ENCODE measurements at regions of chr2 and their contacts with region 1.

Region 1: DNA sequence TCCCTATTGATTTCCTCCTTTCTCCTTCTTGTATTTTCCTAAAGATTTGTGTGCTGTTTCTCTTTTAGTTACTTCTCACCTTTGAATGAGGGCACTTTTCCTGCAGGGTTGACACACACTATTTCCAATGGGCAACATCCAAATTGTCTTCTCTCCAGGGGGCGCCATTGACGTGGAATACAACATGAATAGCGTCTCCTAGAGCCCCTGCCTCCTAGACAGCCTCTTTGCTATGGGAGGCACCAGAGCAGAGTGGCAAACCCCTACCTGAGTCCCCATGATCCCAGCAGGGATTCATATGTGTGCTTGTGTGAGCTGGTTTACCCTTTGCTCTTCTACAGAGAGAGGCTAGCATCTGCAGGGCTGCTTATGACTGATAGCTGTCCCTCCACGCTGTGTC is 61.3 kb upstream of the ITSN2 start:
- DNase-seq: peak in 1 of 2 experiments; percentile 83
- H3K4me3 ChIP-seq: no peak overlapping the region
- H3K27ac ChIP-seq: no peak overlapping the region
- H3K4me1 ChIP-seq: peaks cover 0 to 4% (median 1%) of the 10 kb centered on the region in 4 experiments; a peak in 2 of 7 replicates
- H3K27me3 ChIP-seq: no peaks in the 10 kb centered on the region
- CTCF ChIP-seq: peak; percentile 26 to 75 (median 62)
- EP300 ChIP-seq: no peak
- POLR2A ChIP-seq: no peak
- RAD21 ChIP-seq: peak; percentile 83 to 86

Region 2: DNA sequence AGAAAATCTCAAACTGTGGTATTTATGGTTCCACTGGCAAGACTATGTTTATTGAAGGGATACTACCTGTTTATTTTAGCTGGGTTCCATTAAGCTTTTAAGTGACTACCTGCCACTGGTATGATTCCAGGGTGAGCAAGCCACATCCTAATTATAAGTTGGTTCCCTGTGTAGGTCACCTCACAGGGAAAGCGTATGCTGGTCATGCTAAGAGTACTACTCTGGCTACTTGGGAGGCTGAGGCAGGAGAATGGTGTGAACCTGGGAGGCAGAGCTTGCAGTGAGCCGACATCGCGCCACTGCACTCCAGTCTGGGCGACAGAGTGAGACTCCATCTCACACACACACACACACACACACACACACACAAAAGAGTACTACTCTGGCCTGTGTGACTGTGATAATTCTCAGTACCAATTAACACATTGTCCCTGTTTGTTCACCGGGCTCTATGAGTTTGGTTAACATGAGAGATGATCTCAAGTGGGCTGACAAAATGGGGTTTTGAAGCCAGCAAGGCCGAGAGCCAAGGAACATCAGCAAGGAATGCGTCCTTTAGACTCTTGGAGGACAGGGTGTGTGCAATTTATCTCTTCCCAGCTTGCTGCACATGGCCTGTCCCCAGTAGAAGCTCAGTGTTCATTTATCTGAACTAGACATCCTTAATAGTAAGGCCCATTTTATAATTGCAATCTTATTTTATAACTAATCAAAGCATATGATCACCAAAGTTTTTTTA is 46.1 kb before region 1 on chr2:
- CTCF ChIA-PET with region 1: no interaction called
- POLR2A ChIA-PET with region 1: no interaction called
- DNase-seq: peak in 1 of 2 experiments; percentile 37
- H3K4me3 ChIP-seq: no peak overlapping the region
- H3K27ac ChIP-seq: no peak overlapping the region
- H3K4me1 ChIP-seq: no peaks in the 10 kb centered on the region
- H3K27me3 ChIP-seq: no peaks in the 10 kb centered on the region
- CTCF ChIP-seq: no peak
- EP300 ChIP-seq: no peak
- POLR2A ChIP-seq: no peak
- RAD21 ChIP-seq: no peak

Region 3: GRCh38 chr2:24409700-24410556 is 11.7 kb before region 1 on chr2:
- CTCF ChIA-PET with region 1: interaction called, 24 read pairs
- POLR2A ChIA-PET with region 1: no interaction called
- DNase-seq: no peak
- H3K4me3 ChIP-seq: no peak overlapping the region
- H3K27ac ChIP-seq: no peak overlapping the region
- H3K4me1 ChIP-seq: peaks cover 0 to 7% (median 3%) of the 10 kb centered on the region in 4 experiments; a peak in 2 of 7 replicates
- H3K27me3 ChIP-seq: no peaks in the 10 kb centered on the region
- CTCF ChIP-seq: peak in 2 of 3 experiments; percentile 76 to 90; a peak in 3 of 4 replicates
- EP300 ChIP-seq: no peak
- POLR2A ChIP-seq: no peak
- RAD21 ChIP-seq: peak; percentile 90 to 97

Region 4: DNA sequence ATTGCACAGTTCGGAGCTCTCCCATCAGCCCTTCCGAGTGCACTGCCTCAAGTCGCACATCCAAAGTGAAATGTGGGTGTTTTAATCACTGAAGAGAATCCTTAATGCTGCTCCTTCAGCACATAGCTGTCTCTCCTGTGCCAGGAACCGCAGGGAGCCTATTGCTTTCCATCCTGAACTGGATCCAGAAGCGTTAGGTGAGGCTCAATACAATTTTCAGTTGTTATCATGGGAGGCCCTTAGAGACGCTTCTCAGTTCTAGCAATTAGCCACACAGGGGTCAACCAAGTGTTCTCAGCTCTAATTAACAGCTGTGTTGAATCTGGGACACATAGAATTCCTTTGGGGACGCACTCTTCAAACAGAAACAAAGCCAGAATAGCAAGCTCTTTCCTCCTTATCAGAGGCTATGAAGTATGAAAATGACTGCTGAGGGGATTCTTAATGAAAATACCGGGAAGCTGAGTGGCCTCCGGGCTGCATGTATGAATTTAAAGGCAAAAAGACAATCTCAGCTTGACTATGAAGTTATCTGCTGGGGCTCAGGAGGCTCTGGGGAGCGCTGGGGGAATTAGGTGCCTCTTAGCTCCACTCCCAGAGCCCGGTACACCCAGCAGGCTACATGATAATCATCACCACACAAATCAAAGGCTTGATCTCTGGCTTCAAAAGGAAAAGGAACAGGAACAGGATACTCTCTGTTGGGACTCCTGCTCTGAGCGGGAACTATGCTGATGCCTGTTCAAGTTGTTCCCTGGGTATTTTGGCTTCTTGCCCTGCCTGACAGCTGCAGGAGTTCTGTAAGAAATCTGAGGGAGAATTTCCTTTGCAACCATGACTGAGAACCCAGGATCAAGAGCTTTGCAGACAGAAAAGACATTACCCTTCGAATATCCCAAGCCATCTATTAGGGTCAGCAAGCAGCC is 14.0 kb after region 1 on chr2:
- CTCF ChIA-PET with region 1: interaction called, 15 read pairs
- POLR2A ChIA-PET with region 1: no interaction called
- DNase-seq: no peak
- H3K4me3 ChIP-seq: no peak overlapping the region
- H3K27ac ChIP-seq: no peak overlapping the region
- H3K4me1 ChIP-seq: no peaks in the 10 kb centered on the region
- H3K27me3 ChIP-seq: no peaks in the 10 kb centered on the region
- CTCF ChIP-seq: no peak
- EP300 ChIP-seq: no peak
- POLR2A ChIP-seq: no peak
- RAD21 ChIP-seq: no peak

Region 5: GRCh38 chr2:24691806-24692205 is 270.1 kb after region 1 on chr2:
- CTCF ChIA-PET with region 1: no interaction called
- POLR2A ChIA-PET with region 1: no interaction called
- DNase-seq: no peak
- H3K4me3 ChIP-seq: no peak overlapping the region
- H3K27ac ChIP-seq: no peak overlapping the region
- H3K4me1 ChIP-seq: no peaks in the 10 kb centered on the region
- H3K27me3 ChIP-seq: no peaks in the 10 kb centered on the region
- CTCF ChIP-seq: no peak
- EP300 ChIP-seq: no peak
- POLR2A ChIP-seq: no peak
- RAD21 ChIP-seq: no peak

Measured in H1 (cell line).